MCF 10A (cell line): ENCODE measurements at regions of chr3 and their contacts with region 1.

Region 1: DNA sequence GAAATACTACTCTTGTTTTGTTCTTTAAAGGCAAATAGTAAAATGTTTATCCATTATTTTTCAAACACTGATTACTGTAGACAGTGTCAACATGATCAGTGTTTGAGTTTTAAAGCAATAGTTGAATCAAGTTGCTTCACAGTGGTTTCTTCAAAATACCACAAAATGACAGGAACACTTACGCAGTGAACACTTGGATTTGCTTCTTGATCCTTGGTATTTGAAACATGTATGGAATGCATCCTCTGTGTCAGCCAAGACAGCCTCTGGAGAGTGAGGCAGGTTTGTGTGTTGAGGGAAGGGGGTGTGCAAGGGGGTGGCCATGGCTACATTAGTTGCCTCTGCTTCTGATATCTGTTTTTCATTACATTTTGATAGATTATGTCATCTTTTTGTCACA is 413.0 kb downstream of the RBMS3 start:
- DNase-seq: peak; percentile 89
- H3K4me3 Mint-ChIP-seq: peak overlapping the region; percentile 43
- H3K27ac Mint-ChIP-seq: peak overlapping the region; percentile 91
- H3K4me1 Mint-ChIP-seq: peaks cover 44% of the 10 kb centered on the region
- H3K27me3 Mint-ChIP-seq: no peaks in the 10 kb centered on the region
- CTCF ChIP-seq: no peak

Region 2: GRCh38 chr3:28924744-28925360 is 769.0 kb before region 1 on chr3:
- CTCF ChIA-PET with region 1: no interaction called
- POLR2A ChIA-PET with region 1: no interaction called
- intact Hi-C with region 1: loop called (anchors 10 kb)
- DNase-seq: peak; percentile 36
- H3K4me3 Mint-ChIP-seq: no peak overlapping the region
- H3K27ac Mint-ChIP-seq: no peak overlapping the region
- H3K4me1 Mint-ChIP-seq: no peaks in the 10 kb centered on the region
- H3K27me3 Mint-ChIP-seq: no peaks in the 10 kb centered on the region
- CTCF ChIP-seq: no peak

Region 3: DNA sequence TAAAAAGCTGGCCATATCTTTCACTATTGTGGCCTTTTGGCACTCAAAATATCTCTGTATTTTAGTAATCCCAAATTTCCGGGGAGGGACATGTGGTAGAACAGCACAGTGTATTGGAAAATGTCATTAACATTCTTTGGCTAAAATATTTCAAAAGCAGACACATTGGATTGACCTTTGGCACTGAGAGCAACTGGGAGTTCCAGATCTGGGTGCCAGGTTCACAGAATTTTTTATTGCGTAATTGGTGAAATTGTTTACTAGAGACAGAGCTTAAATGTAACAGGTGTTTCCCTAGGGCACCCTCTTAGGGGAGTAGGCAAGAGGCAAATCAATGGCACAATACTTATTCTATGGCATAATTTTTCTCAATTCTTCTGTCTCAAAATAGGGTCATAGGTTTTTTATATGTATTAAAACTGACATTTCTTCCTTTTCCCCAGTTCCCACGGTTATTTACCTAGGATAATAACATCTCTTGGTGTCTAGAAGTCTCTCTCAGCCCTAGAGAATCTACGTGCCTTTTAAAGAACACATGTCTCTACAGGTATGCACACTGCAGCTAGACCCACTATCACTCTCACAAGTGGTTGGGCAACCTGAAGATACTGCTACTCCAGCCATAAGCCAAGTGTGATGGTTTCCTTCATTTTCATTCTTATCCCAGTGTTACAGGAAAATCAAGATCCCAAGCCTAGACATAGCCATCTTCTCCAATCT is 402.4 kb before region 1 on chr3:
- CTCF ChIA-PET with region 1: interaction called, 3 read pairs
- POLR2A ChIA-PET with region 1: interaction called, 22 read pairs
- intact Hi-C with region 1: no loop called
- DNase-seq: peak; percentile 92
- H3K4me3 Mint-ChIP-seq: peak overlapping the region; percentile 6
- H3K27ac Mint-ChIP-seq: peak overlapping the region; percentile 85
- H3K4me1 Mint-ChIP-seq: peaks cover 49% of the 10 kb centered on the region
- H3K27me3 Mint-ChIP-seq: no peaks in the 10 kb centered on the region
- CTCF ChIP-seq: no peak